ENCODE measurements at regions of chr10 and their contacts with region 1.

Region 1: DNA sequence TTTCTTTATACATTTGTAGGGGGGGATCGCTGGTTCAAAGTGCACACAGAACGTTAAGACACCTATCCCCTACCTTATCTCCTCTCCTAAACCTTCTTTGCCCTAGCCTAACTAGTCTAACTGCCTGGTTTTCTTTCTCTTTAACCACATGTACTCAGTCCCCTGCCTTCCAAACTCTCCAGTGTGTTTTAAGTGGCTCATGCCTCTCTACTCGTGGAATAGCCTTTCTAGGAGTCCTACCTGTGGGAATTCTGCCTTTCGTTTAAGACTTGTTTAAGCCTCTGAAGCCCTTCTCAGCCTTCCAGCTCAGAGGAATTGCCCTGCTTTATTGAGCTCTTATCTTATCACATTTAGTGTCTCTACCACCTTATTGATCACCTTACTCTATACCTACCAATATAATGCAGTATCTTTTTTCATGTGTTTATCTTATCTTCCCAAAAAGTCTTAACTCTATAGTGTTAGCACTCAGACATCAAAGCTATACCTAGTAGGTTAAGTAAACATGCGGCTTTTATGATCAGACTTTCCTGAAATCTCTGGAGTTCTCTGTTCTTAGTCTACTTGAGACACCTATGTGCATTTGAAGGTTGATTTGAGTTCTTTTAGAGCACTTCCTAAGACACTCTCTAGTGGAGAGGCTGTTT is 50.7 kb downstream of the ARID5B start:
- DNase-seq: no peak
- ATAC-seq: peak; percentile 83

Region 2: GRCh38 chr10:61903221-61903927 is 48.8 kb before region 1 on chr10:
- intact Hi-C with region 1: loop called in 1 of 2 experiments (anchors 1 kb)
- DNase-seq: peak; percentile 67 to 77
- ATAC-seq: peak; percentile 65

Measured in left colon (tissue), 2 donors.